ENCODE measurements at regions of chr2 and their contacts with region 1.

Region 1: DNA sequence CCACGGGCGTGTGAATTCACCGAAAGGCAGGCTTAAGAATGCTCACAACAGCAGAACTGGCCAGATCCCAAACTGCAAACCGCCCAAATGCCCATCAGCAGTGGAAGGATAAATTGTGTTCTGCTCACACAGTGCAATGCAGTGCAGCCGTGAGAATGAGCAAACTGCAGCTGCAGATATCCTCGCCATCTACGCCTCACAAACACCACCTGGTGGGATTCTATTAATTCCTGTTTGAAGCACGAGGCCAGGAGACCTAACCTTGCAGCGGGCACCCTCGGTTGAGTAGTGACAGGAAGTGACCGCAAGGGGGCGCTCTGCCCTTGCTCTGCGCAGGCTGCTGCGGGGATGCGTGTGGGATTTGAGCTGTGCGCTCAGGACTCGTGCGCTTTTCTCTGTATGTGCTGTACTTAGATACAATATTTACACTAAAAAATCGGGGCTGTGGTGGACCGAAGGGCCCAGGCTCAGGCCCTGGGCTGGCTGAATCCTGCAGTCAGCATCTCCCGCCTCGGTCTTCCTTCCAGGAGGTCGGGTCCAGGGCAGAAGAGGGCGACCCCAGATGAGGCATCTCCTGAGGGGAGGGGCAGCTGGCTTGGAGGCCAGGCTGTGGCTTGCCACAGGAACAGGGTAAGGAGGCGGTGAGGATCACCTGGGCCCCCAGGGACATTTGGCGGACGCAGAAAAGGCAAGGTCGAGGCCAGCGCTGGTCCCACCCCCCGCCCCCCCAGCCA is 19.8 kb upstream of the PDIA6 start:
- DNase-seq: peak; percentile 69
- ATAC-seq: peak; percentile 81
- H3K4me3 ChIP-seq: no peak overlapping the region
- H3K27ac ChIP-seq: no peak overlapping the region
- H3K4me1 ChIP-seq: peaks cover 0 to 23% of the 10 kb centered on the region in 2 experiments; a peak in 2 of 4 replicates
- H3K27me3 ChIP-seq: no peaks in the 10 kb centered on the region
- CTCF ChIP-seq: peak; percentile 91 to 98 (median 98)
- POLR2A ChIP-seq: no peak
- RAD21 ChIP-seq: peak; percentile 99

Region 2: DNA sequence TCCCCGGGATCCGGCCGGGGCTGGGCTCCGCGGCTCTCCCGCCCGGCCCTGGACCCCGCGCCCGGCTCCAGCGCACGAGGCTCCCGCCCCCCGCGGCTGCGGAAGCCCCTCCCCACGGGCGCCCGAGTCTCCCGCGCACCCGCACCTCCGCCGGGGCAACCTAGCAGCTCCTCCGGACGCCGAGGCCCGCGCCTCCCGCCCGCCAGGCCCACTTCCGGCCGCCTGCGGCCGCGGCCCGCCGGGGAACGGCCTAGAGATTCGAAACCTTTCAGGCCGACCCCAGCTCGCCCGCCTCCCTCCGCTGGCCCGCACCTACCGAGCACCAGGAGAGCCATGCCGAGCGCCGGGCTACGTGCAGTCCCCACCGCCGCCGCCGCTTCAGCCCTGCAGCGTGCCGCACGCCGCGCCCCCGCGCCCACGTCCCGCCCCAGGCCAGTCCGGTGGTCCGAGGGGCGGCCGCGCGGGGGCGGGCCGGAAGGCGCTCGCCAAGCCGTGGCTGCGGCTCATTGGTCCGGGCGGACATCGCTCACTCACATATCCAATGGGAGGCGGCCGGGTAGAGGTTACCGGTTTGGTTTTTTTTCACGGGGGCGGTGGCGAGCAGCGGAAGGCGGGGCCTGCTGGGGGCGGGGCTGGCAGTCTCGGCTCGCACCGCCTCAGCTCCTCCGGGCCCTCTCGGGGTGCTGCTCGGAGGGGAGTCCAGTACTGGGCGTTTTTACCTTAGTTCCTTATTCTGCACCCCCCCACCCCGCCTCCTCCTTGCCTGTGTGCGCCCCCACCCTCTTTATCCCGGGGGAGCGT is 19.8 kb before region 1 on chr2 and contains the start of gene PDIA6:
- CTCF ChIA-PET with region 1: interaction called, 13 read pairs
- POLR2A ChIA-PET with region 1: no interaction called
- RAD21 ChIA-PET with region 1: no interaction called
- intact Hi-C with region 1: no loop called
- DNase-seq: peak; percentile 92
- ATAC-seq: peak; percentile 95
- H3K4me3 ChIP-seq: peak within 1 kb of the TSS; percentile 65 to 87
- H3K27ac ChIP-seq: peak within 1 kb of the TSS; percentile 89
- H3K4me1 ChIP-seq: peaks cover 5 to 30% of the 10 kb centered on the region in 2 experiments; a peak in 3 of 4 replicates
- H3K27me3 ChIP-seq: no peaks in the 10 kb centered on the region
- CTCF ChIP-seq: no peak
- POLR2A ChIP-seq: peak; percentile 36
- RAD21 ChIP-seq: no peak
- total RNA-seq, gene PDIA6: 149 TPM

Region 3: GRCh38 chr2:11024259-11024645 is 191.9 kb after region 1 on chr2:
- CTCF ChIA-PET with region 1: no interaction called
- POLR2A ChIA-PET with region 1: no interaction called
- RAD21 ChIA-PET with region 1: no interaction called
- intact Hi-C with region 1: loop called (anchors 10 kb)
- DNase-seq: no peak
- ATAC-seq: no peak
- H3K4me3 ChIP-seq: no peak overlapping the region
- H3K27ac ChIP-seq: no peak overlapping the region
- H3K4me1 ChIP-seq: peaks cover 0 to 17% of the 10 kb centered on the region in 2 experiments; a peak in 2 of 4 replicates
- H3K27me3 ChIP-seq: no peaks in the 10 kb centered on the region
- CTCF ChIP-seq: no peak
- POLR2A ChIP-seq: no peak
- RAD21 ChIP-seq: no peak

Region 4: GRCh38 chr2:11154923-11155380 is 322.6 kb after region 1 on chr2:
- CTCF ChIA-PET with region 1: interaction called, 11 read pairs
- POLR2A ChIA-PET with region 1: no interaction called
- RAD21 ChIA-PET with region 1: interaction called in 1 of 2 experiments, 4 read pairs
- intact Hi-C with region 1: no loop called
- DNase-seq: peak; percentile 89
- ATAC-seq: peak; percentile 90
- H3K4me3 ChIP-seq: peak overlapping the region; percentile 58 to 77
- H3K27ac ChIP-seq: peak overlapping the region; percentile 93
- H3K4me1 ChIP-seq: peaks cover 7 to 18% of the 10 kb centered on the region in 2 experiments; a peak in 3 of 4 replicates
- H3K27me3 ChIP-seq: no peaks in the 10 kb centered on the region
- CTCF ChIP-seq: no peak
- POLR2A ChIP-seq: no peak
- RAD21 ChIP-seq: no peak

Region 5: GRCh38 chr2:11583840-11584524 is 751.6 kb after region 1 on chr2:
- CTCF ChIA-PET with region 1: interaction called, 5 read pairs
- POLR2A ChIA-PET with region 1: no interaction called
- RAD21 ChIA-PET with region 1: no interaction called
- intact Hi-C with region 1: loop called (anchors 5 kb)
- DNase-seq: peak; percentile 69
- ATAC-seq: peak; percentile 81
- H3K4me3 ChIP-seq: no peak overlapping the region
- H3K27ac ChIP-seq: no peak overlapping the region
- H3K4me1 ChIP-seq: peaks cover 4 to 21% of the 10 kb centered on the region in 2 experiments
- H3K27me3 ChIP-seq: no peaks in the 10 kb centered on the region
- CTCF ChIP-seq: peak; percentile 93 to 96 (median 94)
- POLR2A ChIP-seq: no peak
- RAD21 ChIP-seq: peak; percentile 96

Measured in HCT116 (cell line).